WTC11 (cell line): ENCODE measurements at regions of chr12 and their contacts with region 1.

Region 1: DNA sequence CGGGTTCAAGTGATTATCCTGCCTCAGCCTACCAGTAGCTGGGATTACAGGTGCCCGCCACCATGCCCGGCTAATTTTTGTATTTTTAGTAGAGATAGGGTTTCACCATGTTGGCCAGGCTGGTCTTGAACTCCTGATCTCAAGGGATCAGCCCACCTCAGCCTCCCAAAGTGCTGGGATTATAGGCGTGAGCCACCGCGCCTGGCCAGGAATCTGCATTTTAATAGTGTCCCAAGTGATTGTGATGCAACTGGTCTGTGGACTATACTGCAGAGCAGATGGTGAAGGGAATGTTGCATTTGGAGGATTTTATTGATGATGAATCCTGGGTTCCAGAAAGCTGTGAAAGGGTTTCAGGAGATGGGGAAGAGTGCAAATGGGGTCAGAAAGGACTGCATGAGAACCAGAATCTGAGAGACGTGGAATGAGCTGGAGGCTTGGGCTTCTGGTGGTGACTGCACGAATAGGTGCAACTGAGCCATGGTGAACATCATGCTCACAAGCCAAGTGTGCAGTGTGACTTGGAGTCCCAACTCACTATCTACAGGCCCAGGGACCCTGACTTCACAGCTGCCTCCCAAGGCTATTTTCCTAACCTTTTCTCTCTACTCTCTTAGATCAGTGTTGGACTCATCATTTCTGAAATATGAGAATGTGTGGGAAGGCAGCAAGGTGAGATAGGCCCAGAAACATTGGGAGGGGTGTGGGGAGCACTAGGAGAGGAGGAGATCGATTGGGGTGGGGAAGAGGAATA is 4.5 kb downstream of the RPS26 start:
- DNase-seq: no peak
- ATAC-seq: peak; percentile 1; the same call in 1 of the 2 replicates
- H3K4me3 Mint-ChIP-seq: no peak overlapping the region
- H3K27ac Mint-ChIP-seq: peak overlapping the region; percentile 96
- H3K4me1 Mint-ChIP-seq: peaks cover 31% of the 10 kb centered on the region
- H3K27me3 Mint-ChIP-seq: no peaks in the 10 kb centered on the region
- CTCF ChIP-seq: no peak

Region 2: GRCh38 chr12:55926738-55927587 is 119.2 kb before region 1 on chr12:
- CTCF ChIA-PET with region 1: no interaction called
- POLR2A ChIA-PET with region 1: no interaction called
- DNase-seq: peak; percentile 95
- ATAC-seq: peak; percentile 56
- H3K4me3 Mint-ChIP-seq: peak overlapping the region; percentile 94
- H3K27ac Mint-ChIP-seq: peak overlapping the region; percentile 96
- H3K4me1 Mint-ChIP-seq: peaks cover 42% of the 10 kb centered on the region
- H3K27me3 Mint-ChIP-seq: peaks cover 10% of the 10 kb centered on the region
- CTCF ChIP-seq: peak; percentile 51

Region 3: DNA sequence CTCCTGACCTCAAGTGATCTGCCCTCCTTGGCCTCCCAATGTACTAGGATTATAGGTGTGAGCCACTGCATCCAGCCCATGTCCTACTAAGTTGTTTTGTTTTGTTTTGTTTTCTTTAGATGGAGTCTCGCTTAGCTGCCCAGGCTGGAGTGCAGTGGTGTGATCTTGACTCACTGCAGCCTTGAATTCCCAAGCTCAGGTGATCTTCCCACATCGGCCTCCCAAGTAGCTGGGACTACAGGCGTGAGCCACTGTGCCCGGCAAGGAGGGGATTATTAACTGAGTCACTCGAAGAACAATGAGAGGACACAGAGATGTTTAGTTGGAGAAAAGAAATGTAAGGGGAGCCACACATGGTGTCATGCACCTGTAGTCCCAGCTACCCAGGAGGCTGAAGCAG is 15.8 kb after region 1 on chr12:
- CTCF ChIA-PET with region 1: interaction called, 10 read pairs
- POLR2A ChIA-PET with region 1: interaction called, 3 read pairs
- DNase-seq: no peak
- ATAC-seq: no peak
- H3K4me3 Mint-ChIP-seq: no peak overlapping the region
- H3K27ac Mint-ChIP-seq: no peak overlapping the region
- H3K4me1 Mint-ChIP-seq: no peaks in the 10 kb centered on the region
- H3K27me3 Mint-ChIP-seq: no peaks in the 10 kb centered on the region
- CTCF ChIP-seq: no peak

Region 4: DNA sequence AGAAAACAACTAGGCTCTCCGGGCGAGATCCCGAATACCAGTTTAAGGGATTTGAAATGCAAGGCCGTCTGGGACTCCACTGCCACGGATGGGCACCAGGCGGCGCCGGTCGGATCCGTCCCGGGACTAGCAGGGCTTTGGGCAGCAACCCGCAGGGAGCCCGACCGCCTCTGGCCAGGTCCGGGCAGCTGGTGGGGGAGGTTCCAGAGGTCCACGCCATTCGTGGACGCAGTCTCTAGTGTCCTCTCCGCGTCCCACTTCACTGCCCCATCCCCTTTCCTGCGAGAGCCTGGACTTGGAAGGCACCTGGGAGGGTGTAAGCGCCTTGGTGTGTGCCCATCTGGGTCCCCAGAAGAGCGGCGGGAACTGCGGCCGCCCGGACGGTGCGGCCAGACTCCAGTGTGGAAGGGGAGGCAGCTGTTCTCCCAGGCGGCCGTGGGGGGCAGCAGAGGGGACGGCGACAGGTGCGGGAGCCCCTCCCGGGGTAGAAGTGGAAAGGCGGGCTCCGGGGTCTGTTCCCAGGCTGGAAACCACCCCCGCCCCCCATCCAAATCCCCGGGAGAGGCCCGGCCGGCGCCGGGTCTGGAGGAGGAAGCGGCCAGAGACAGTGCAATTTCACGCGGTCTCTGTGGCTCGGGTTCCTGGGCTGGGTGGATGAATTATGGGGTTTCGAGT is 32.9 kb after region 1 on chr12:
- CTCF ChIA-PET with region 1: interaction called, 10 read pairs
- POLR2A ChIA-PET with region 1: interaction called, 5 read pairs
- DNase-seq: peak; percentile 96
- ATAC-seq: peak; percentile 68
- H3K4me3 Mint-ChIP-seq: peak overlapping the region; percentile 89
- H3K27ac Mint-ChIP-seq: peak overlapping the region; percentile 98
- H3K4me1 Mint-ChIP-seq: peaks cover 23% of the 10 kb centered on the region
- H3K27me3 Mint-ChIP-seq: no peaks in the 10 kb centered on the region
- CTCF ChIP-seq: peak; percentile 46; the same call in 1 of the 2 replicates

Region 5: GRCh38 chr12:56084958-56085543 is 38.8 kb after region 1 on chr12:
- CTCF ChIA-PET with region 1: interaction called, 17 read pairs
- POLR2A ChIA-PET with region 1: interaction called, 3 read pairs
- DNase-seq: peak; percentile 74
- ATAC-seq: peak; percentile 50
- H3K4me3 Mint-ChIP-seq: no peak overlapping the region
- H3K27ac Mint-ChIP-seq: no peak overlapping the region; the same call in 1 of the 2 replicates
- H3K4me1 Mint-ChIP-seq: peaks cover 15% of the 10 kb centered on the region
- H3K27me3 Mint-ChIP-seq: no peaks in the 10 kb centered on the region
- CTCF ChIP-seq: peak; percentile 40; the same call in 1 of the 2 replicates

Region 6: GRCh38 chr12:56104109-56104814 is 58.1 kb after region 1 on chr12 and contains the start of gene PA2G4:
- CTCF ChIA-PET with region 1: interaction called, 7 read pairs
- POLR2A ChIA-PET with region 1: interaction called, 12 read pairs
- DNase-seq: peak; percentile 98
- ATAC-seq: peak; percentile 98
- H3K4me3 Mint-ChIP-seq: peak within 1 kb of the TSS; percentile 90
- H3K27ac Mint-ChIP-seq: peak within 1 kb of the TSS; percentile 99
- H3K4me1 Mint-ChIP-seq: peaks cover 24% of the 10 kb centered on the region
- H3K27me3 Mint-ChIP-seq: no peaks in the 10 kb centered on the region
- CTCF ChIP-seq: no peak
- total RNA-seq, gene PA2G4: 198 to 249 TPM (median 199 TPM) in 3 replicates

Region 7: GRCh38 chr12:56117778-56118687 is 71.8 kb after region 1 on chr12 and contains the start of gene ZC3H10:
- CTCF ChIA-PET with region 1: interaction called, 22 read pairs
- POLR2A ChIA-PET with region 1: interaction called, 4 read pairs
- DNase-seq: peak; percentile 98
- ATAC-seq: peak; percentile 75
- H3K4me3 Mint-ChIP-seq: peak within 1 kb of the TSS; percentile 100
- H3K27ac Mint-ChIP-seq: peak within 1 kb of the TSS; percentile 100
- H3K4me1 Mint-ChIP-seq: peaks cover 21% of the 10 kb centered on the region
- H3K27me3 Mint-ChIP-seq: no peaks in the 10 kb centered on the region
- CTCF ChIP-seq: no peak
- total RNA-seq, gene ZC3H10: 11.3 to 13.6 TPM (median 13.1 TPM) in 3 replicates